ENCODE measurements at regions of chr4 and their contacts with region 1.

Region 1: GRCh38 chr4:184745831-184746795 is 12.2 kb upstream of the CENPU start:
- DNase-seq: peak; percentile 80 to 86
- H3K4me3 ChIP-seq: peak overlapping the region; percentile 13 to 25
- H3K27ac ChIP-seq: peak overlapping the region; percentile 75 to 86
- H3K4me1 ChIP-seq: peaks cover 0 to 33% (median 17%) of the 10 kb centered on the region in 4 donors
- H3K27me3 ChIP-seq: no peaks in the 10 kb centered on the region
- CTCF ChIP-seq: peak; percentile 69 to 72

Region 2: GRCh38 chr4:185096032-185096653 is 350.0 kb after region 1 on chr4:
- intact Hi-C with region 1: loop called (anchors 10 kb)
- DNase-seq: no peak
- H3K4me3 ChIP-seq: no peak overlapping the region
- H3K27ac ChIP-seq: no peak overlapping the region
- H3K4me1 ChIP-seq: no peaks in the 10 kb centered on the region
- H3K27me3 ChIP-seq: peaks cover 0 to 11% of the 10 kb centered on the region in 2 donors
- CTCF ChIP-seq: peak; percentile 48 to 62

Measured in tibial artery (tissue), 4 donors.